Gastrocnemius medialis (tissue), 4 donors: ENCODE measurements at regions of chr2 and their contacts with region 1.

Region 1: GRCh38 chr2:189661148-189661956 is at the start of gene ASNSD1:
- DNase-seq: peak; percentile 98 to 99
- ATAC-seq: peak; percentile 100
- H3K4me3 ChIP-seq: peak within 1 kb of the TSS; percentile 77 to 98 (median 92)
- H3K27ac ChIP-seq: peak within 1 kb of the TSS; percentile 93 to 99 (median 96)
- H3K4me1 ChIP-seq: peaks cover 23 to 28% of the 10 kb centered on the region in 2 donors
- H3K27me3 ChIP-seq: no peaks in the 10 kb centered on the region
- CTCF ChIP-seq: peak; percentile 91 to 100 (median 96)
- POLR2A ChIP-seq: peak; percentile 85 to 91
- total RNA-seq, gene ASNSD1: 68.1 to 114 (median 87.3) TPM

Region 2: DNA sequence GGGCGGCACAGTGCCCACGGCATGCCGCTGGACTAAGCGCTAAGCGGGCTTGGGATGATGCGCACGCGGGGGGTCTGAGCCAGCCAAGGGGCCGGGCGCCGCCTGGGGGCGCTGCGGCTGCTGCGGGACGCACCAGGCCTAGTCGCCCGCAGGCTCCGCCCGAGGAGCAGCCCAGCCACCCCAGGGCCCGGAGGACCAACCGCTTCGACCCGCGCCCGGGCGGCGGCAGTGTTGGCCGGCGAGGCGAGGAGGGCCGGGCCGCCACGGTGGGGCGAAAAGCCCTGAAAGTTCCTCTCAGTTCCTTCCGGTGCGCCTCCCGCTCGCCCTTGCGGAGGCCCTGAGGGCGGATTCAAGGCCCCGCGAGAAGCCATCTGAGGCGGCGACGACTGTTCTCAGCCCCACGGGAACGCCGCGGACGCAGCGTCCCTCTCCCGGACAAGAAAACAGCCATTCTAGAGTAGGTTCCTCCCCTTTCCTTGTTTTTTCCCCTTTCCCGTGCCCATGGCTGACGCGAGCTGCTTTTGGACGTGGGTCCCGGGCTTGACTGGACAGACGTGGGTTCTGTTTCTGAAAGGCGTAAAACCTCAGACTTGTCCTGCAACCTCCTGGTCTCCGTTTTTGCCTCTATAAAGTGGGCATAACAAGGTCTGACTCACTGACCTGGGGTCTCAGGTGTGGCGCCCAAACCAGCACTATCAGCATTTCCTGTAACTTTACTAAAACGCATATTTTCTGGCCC is 13.2 kb after region 1 on chr2 and contains the start of gene ANKAR:
- in situ Hi-C with region 1: no loop called
- intact Hi-C with region 1: loop called (anchors 1 kb)
- DNase-seq: peak; percentile 74 to 89
- ATAC-seq: peak; percentile 88 to 90
- H3K4me3 ChIP-seq: peak within 1 kb of the TSS; percentile 63 to 83 (median 72)
- H3K27ac ChIP-seq: peak within 1 kb of the TSS; percentile 91 to 97 (median 94)
- H3K4me1 ChIP-seq: peaks cover 9 to 20% of the 10 kb centered on the region in 2 donors
- H3K27me3 ChIP-seq: no peaks in the 10 kb centered on the region
- CTCF ChIP-seq: peak; percentile 76 to 97 (median 84)
- POLR2A ChIP-seq: peak; percentile 54 to 56
- total RNA-seq, gene ANKAR: 3.4 to 13.1 (median 5.9) TPM

Region 3: GRCh38 chr2:189698020-189698887 is 36.9 kb after region 1 on chr2:
- in situ Hi-C with region 1: loop called in 3 of 4 experiments (anchors 5 kb)
- intact Hi-C with region 1: loop called (anchors 1 kb)
- DNase-seq: no peak
- ATAC-seq: peak; percentile 86 to 92
- H3K4me3 ChIP-seq: no peak overlapping the region
- H3K27ac ChIP-seq: peak overlapping the region; percentile 22 to 61 (median 44)
- H3K4me1 ChIP-seq: no peaks in the 10 kb centered on the region
- H3K27me3 ChIP-seq: no peaks in the 10 kb centered on the region
- CTCF ChIP-seq: peak; percentile 47 to 76 (median 56)
- POLR2A ChIP-seq: no peak

Region 4: GRCh38 chr2:189762551-189763298 is 101.4 kb after region 1 on chr2 and contains the start of gene OSGEPL1:
- in situ Hi-C with region 1: no loop called
- intact Hi-C with region 1: loop called (anchors 2 kb)
- DNase-seq: peak; percentile 87 to 89
- ATAC-seq: peak; percentile 98
- H3K4me3 ChIP-seq: peak within 1 kb of the TSS; percentile 59 to 89 (median 66)
- H3K27ac ChIP-seq: peak within 1 kb of the TSS; percentile 81 to 89 (median 86)
- H3K4me1 ChIP-seq: peaks cover 16 to 23% of the 10 kb centered on the region in 2 donors
- H3K27me3 ChIP-seq: no peaks in the 10 kb centered on the region
- CTCF ChIP-seq: peak in 4 of 5 experiments; percentile 13 to 52 (median 32)
- POLR2A ChIP-seq: peak in 1 of 2 donors; percentile 8
- total RNA-seq, gene OSGEPL1: 2.1 to 15.6 (median 6.5) TPM

Region 5: GRCh38 chr2:190069936-190070696 is 408.8 kb after region 1 on chr2:
- in situ Hi-C with region 1: no loop called
- intact Hi-C with region 1: loop called (anchors 10 kb)
- DNase-seq: no peak
- ATAC-seq: peak; percentile 69 to 90
- H3K4me3 ChIP-seq: no peak overlapping the region
- H3K27ac ChIP-seq: no peak overlapping the region
- H3K4me1 ChIP-seq: peaks cover 0 to 6% of the 10 kb centered on the region in 2 donors
- H3K27me3 ChIP-seq: no peaks in the 10 kb centered on the region
- CTCF ChIP-seq: peak in 4 of 5 experiments; percentile 55 to 67 (median 61)
- POLR2A ChIP-seq: no peak

Region 6: GRCh38 chr2:191013932-191014652 is 1352.7 kb after region 1 on chr2 and contains the start of gene STAT1:
- in situ Hi-C with region 1: no loop called
- intact Hi-C with region 1: loop called (anchors 10 kb)
- DNase-seq: peak; percentile 83 to 88
- ATAC-seq: peak; percentile 92 to 96
- H3K4me3 ChIP-seq: peak within 1 kb of the TSS; percentile 82 to 98 (median 90)
- H3K27ac ChIP-seq: peak within 1 kb of the TSS; percentile 89 to 98 (median 95)
- H3K4me1 ChIP-seq: peaks cover 13 to 25% of the 10 kb centered on the region in 2 donors
- H3K27me3 ChIP-seq: no peaks in the 10 kb centered on the region
- CTCF ChIP-seq: peak in 4 of 5 experiments; percentile 18 to 28 (median 20)
- POLR2A ChIP-seq: peak; percentile 89 to 90
- total RNA-seq, gene STAT1: 23.0 to 36.9 (median 28.6) TPM